A673 (cell line): ENCODE measurements at regions of chr12 and their contacts with region 1.

Region 1: DNA sequence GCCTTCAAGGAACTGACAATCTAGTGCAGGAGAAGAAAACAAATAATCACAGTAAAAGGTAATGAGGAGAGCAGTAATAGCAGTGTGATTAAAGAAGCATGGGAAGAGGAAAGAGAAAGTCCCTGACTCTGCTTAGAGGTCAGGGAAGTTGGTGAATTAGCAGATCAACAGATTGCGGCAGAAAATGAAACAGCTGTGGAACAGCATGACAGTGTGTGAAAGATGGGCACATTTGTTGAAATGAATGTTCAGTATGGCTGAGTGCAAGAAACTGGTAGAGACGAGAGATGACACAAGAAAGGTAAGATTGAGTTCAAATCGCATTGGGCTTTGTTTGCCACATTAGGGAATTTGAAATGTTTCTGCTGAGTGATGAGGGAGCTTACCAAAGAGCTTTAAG is 63.7 kb upstream of the RASSF8 start:
- DNase-seq: no peak
- H3K4me3 ChIP-seq: no peak overlapping the region
- H3K27ac ChIP-seq: no peak overlapping the region
- H3K4me1 ChIP-seq: no peaks in the 10 kb centered on the region
- H3K27me3 ChIP-seq: no peaks in the 10 kb centered on the region
- CTCF ChIP-seq: no peak

Region 2: DNA sequence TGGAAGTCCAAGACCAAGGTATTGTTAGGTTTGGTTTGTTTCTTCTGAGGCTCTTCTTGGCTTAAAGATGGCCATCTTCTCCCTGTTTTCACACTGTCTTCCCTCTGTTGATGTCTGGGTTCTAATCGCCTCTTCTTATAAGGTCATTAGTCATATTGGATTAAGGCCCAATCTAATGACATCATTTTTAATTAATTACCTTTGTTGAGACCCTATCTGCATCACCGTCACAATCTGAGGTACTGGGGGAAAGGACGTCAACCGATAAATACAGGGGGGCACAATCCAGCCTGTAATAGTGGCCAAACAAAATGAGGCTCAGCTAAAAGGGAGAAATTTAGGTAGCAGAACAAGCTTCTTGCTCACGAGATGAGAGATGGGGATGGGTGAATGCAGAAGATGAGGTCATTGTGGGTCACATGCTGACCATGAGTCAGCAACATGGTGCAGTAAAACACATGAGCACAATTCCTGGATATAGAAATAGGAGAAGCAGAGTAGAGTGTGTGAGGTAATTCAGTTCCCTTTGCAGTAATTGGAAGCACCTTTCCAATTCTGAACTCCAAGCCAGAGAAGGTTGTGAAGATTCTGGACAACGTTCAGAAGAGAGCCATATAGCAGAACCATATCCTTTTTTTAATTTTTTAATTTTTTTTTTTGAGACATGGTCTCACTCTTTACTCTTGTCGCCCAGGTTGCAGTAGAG is 279.8 kb before region 1 on chr12:
- CTCF ChIA-PET with region 1: no interaction called
- POLR2A ChIA-PET with region 1: interaction called, 10 read pairs
- intact Hi-C with region 1: no loop called
- DNase-seq: no peak
- H3K4me3 ChIP-seq: no peak overlapping the region
- H3K27ac ChIP-seq: no peak overlapping the region
- H3K4me1 ChIP-seq: no peaks in the 10 kb centered on the region
- H3K27me3 ChIP-seq: no peaks in the 10 kb centered on the region
- CTCF ChIP-seq: no peak